Spleen (tissue), 13 donors: ENCODE measurements at regions of chr9 and their contacts with region 1.

Region 1: DNA sequence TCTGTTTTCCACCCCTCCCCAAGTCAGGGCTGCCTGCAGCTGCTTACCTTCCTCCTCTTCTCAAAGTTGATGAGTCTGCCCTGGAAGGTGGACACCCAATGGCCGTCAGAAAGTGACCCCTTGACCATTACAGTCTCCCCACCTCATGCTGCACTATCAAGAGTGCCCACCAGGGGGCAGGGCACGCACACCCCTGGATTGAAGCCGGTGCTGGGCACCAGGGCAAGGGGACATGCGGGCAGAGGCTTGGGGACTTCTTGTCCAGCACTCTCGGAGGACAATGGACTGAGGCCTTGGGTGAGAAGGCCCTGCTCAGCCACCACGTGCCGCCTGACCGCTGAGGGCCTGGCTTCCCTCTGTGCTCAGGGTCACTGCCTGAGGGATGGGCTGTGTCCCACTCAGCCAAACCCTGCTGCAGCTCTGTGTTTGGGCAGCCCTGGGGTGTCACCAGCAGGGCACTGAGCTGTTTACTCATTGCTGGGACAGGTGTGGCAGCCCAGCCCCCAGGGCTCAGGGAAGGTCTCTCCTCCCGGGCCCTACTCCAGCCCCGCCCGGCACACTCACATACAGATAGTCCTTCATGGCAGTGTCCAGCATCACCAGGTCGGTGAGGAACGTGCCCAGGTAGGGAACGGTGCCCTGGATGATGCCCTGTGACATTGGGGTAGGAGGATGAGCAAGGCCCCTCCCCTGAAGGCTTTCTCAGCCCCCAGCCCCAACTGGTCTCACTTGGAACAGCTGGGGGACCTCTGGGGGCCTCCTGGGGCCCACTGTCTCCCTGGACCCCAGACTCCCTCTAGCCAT is 17.7 kb downstream of the RALGDS start:
- DNase-seq: peak; percentile 92
- H3K4me3 ChIP-seq: no peak overlapping the region
- H3K27ac ChIP-seq: peak overlapping the region in 3 of 8 donors; percentile 15 to 37 (median 36)
- H3K4me1 ChIP-seq: peaks cover 0 to 16% (median 6%) of the 10 kb centered on the region in 6 donors
- H3K27me3 ChIP-seq: no peaks in the 10 kb centered on the region
- CTCF ChIP-seq: peak; percentile 91 to 99 (median 97)
- POLR2A ChIP-seq: no peak

Region 2: GRCh38 chr9:133144137-133144903 is 40.9 kb after region 1 on chr9:
- intact Hi-C with region 1: loop called (anchors 2 kb)
- DNase-seq: peak; percentile 96
- H3K4me3 ChIP-seq: peak overlapping the region in 6 of 8 donors; percentile 23 to 60 (median 30)
- H3K27ac ChIP-seq: peak overlapping the region; percentile 6 to 89 (median 77)
- H3K4me1 ChIP-seq: peaks cover 35 to 91% (median 72%) of the 10 kb centered on the region in 6 donors
- H3K27me3 ChIP-seq: no peaks in the 10 kb centered on the region
- CTCF ChIP-seq: peak; percentile 90 to 99 (median 98)
- POLR2A ChIP-seq: peak in 1 of 3 donors; percentile 4